ENCODE measurements at regions of chr13 and their contacts with region 1.

Region 1: DNA sequence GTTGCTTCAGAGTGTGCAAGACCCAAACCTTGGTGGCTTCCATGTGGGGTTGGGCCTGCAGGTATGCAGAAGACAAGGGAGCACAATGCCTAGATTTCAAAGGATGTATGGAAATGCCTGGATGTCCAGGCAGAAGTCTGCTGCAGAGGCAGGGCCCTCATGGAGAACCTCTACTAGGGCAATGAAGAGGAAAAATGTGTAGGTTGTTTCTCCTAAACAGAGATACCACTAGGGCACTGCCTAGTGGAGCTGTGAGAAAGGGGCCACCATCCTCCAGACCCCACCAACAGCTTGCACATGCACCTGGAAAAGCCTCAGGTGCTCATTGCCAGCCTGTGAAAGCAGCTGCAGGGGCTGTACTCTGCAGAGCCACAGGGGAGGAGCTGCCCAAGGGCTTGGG is 532.6 kb upstream of the GPC6 start:
- DNase-seq: no peak
- ATAC-seq: no peak
- H3K4me3 ChIP-seq: no peak overlapping the region
- H3K27ac ChIP-seq: no peak overlapping the region
- H3K4me1 ChIP-seq: no peaks in the 10 kb centered on the region
- H3K27me3 ChIP-seq: no peaks in the 10 kb centered on the region
- CTCF ChIP-seq: no peak

Region 2: GRCh38 chr13:91785431-91786119 is 908.5 kb before region 1 on chr13:
- intact Hi-C with region 1: no loop called
- DNase-seq: no peak
- ATAC-seq: no peak
- H3K4me3 ChIP-seq: no peak overlapping the region
- H3K27ac ChIP-seq: no peak overlapping the region
- H3K4me1 ChIP-seq: no peaks in the 10 kb centered on the region
- H3K27me3 ChIP-seq: no peaks in the 10 kb centered on the region
- CTCF ChIP-seq: no peak

Region 3: DNA sequence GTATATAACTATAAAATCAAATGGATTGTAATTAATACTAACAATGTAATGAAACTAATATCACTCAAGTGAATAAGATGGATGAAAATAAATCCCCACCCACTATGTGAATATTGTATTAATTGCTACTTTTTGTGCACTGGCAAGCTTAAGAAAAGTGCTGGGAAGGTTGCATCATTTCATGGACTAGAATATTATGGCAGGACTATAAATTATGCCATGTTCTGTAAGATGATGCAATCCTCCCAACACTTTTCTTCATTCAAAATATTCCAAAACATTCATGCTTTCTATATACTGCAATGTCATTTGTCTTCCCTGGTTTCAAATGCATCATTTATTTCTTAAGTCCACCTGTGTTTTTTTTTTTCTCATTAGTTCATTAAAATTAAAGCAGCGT is 75.0 kb after region 1 on chr13:
- intact Hi-C with region 1: no loop called
- DNase-seq: no peak
- ATAC-seq: no peak
- H3K4me3 ChIP-seq: no peak overlapping the region
- H3K27ac ChIP-seq: no peak overlapping the region
- H3K4me1 ChIP-seq: no peaks in the 10 kb centered on the region
- H3K27me3 ChIP-seq: no peaks in the 10 kb centered on the region
- CTCF ChIP-seq: no peak

Region 4: DNA sequence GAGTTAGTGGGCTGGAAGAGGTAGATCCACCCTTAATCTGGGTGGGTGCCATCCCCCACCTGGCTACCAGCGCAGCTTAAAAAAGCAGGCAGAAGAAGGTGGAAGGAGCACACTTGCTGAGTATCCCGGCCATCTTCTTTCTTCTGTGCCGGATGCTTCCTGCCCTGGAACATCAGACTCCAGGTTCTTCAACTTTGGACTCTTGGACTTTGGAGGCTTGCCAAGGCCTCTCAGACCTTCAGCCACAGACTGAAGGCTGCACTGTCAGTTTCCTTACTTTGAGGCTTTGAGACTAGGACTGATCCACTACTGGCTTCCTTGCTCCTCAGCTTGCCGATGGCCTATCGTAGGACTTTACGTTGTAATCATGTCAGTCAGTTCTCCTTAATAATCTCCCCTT is 404.9 kb after region 1 on chr13:
- intact Hi-C with region 1: loop called in 1 of 2 experiments (anchors 10 kb)
- DNase-seq: no peak
- ATAC-seq: no peak
- H3K4me3 ChIP-seq: no peak overlapping the region
- H3K27ac ChIP-seq: no peak overlapping the region
- H3K4me1 ChIP-seq: no peaks in the 10 kb centered on the region
- H3K27me3 ChIP-seq: no peaks in the 10 kb centered on the region
- CTCF ChIP-seq: no peak